Dorsolateral prefrontal cortex (tissue), 120 donors: ENCODE measurements at regions of chr11 and their contacts with region 1.

Region 1: GRCh38 chr11:18698341-18699268 is at the start of gene TMEM86A:
- DNase-seq: peak; percentile 93 to 99 (median 94)
- H3K4me3 ChIP-seq: peak within 1 kb of the TSS; percentile 60 to 99 (median 83)
- H3K27ac ChIP-seq: peak within 1 kb of the TSS in 57 of 59 donors; percentile 16 to 95 (median 80)
- H3K27me3 ChIP-seq: no peaks in the 10 kb centered on the region
- CTCF ChIP-seq: peak in 11 of 56 donors; percentile 5 to 22 (median 9)
- total RNA-seq, gene TMEM86A: 4.9 to 18.5 (median 10.7) TPM

Region 2: DNA sequence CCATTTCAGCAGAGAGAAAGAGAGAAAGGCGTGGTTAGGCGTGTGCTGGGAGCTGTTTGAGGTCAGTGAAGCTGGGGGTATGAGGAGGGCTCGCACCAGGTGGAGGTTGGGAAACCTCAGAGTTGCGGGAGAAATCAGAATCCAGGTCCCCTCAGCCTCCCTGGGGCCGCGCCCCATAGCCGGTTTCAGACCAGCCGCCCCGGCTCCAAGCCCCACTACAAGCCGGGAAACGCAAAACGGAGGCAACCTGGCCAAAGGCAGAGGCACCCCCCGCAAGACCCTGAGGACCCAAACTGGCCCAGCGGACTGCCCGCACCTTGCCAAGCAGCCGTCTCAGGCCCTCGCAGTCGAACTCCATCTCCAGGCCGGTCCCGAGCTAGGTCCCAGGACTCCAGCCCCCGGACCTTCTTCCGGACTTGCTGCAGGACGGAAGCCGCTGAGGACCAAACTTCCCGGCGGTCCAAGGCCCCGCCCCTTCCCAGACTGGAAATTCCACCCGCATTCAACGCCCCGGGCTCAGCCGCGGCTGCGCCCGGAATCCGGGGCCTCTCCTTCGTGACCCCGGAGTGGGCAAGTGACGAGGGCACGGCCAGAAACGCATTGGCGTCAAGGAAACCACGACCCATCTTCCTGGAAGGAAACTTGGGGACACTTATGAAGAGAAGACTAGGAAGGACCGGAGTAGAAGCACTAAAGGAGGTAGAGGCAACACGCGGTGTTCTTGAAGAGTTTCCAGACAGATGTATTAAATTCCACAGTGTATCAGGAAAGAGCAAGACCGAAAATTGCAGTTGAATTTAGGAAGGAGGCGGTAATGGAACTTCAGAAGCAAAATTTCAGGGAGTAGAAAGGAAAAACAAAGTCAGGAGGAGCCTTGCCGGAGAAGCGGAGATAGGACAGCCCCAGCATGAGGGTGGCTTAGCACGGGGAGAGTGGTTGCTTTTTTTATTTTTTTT is 110.0 kb before region 1 on chr11 and contains the start of gene UEVLD:
- intact Hi-C with region 1: loop called (anchors 5 kb)
- DNase-seq: peak; percentile 78 to 92 (median 84)
- H3K4me3 ChIP-seq: peak within 1 kb of the TSS; percentile 58 to 100 (median 90)
- H3K27ac ChIP-seq: peak within 1 kb of the TSS in 58 of 59 donors; percentile 16 to 90 (median 76)
- H3K27me3 ChIP-seq: no peaks in the 10 kb centered on the region
- CTCF ChIP-seq: peak in 33 of 56 donors; percentile 10 to 50 (median 25)
- total RNA-seq, gene UEVLD: 7.9 to 27.1 (median 16.5) TPM